Activated CD4-positive, alpha-beta T cell treated with anti-CD3 and anti-CD28 coated beads for 36 hours (primary cell): ENCODE measurements at regions of chr7 and their contacts with region 1.

Region 1: DNA sequence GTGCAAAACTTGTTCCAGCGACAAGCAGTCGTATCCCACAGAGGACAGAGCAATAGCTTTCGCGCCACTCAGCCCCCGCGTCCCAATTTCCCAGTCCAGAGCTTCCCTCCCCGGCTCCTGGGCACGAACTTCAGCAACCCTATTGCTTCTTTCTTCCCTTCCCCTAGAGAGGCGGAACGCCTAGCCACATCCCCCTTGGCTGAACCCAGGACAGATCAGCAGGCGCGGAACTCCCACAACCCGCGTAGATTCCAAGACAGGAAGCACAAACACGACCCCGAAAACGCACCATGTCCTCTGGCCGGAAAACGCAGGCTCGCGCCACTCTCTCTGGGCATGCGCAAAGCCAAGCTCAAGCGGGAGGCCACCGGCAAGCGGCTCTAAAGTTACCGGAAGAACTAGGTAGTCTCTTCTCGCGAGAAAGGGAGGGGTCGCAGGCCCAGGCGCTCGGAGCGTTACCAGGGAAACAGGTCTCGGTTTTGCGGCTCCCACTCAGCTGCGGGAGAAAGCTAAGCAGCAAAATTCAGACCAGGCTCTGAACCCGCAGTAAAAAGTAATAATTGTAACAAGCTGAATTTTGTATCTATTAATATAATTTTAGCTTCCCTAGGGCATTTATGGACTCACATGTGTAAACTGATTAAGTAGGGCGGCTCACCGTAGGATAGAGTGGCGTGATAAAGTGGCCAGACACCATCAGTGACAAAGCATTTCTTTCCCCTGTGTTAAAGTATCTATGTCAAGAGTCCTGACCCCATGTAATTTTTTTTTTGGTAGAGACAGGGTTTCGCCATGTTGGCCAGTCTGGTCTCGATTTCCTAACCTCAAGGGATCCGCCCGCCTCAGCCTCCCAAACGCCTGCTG is at the start of gene TMEM209:
- DNase-seq: peak; percentile 96
- ATAC-seq: peak; percentile 98
- H3K4me3 Mint-ChIP-seq: peak within 1 kb of the TSS; percentile 93
- H3K27ac Mint-ChIP-seq: peak within 1 kb of the TSS; percentile 100
- H3K4me1 Mint-ChIP-seq: peaks cover 35% of the 10 kb centered on the region
- H3K27me3 Mint-ChIP-seq: no peaks in the 10 kb centered on the region
- total RNA-seq, gene TMEM209: 41.0 to 57.0 TPM

Region 2: GRCh38 chr7:130050773-130051125 is 154.6 kb before region 1 on chr7:
- CTCF ChIA-PET with region 1: no interaction called
- POLR2A ChIA-PET with region 1: no interaction called
- intact Hi-C with region 1: loop called in 1 of 2 experiments (anchors 1 kb)
- DNase-seq: no peak
- ATAC-seq: no peak
- H3K4me3 Mint-ChIP-seq: peak overlapping the region; percentile 90
- H3K27ac Mint-ChIP-seq: peak overlapping the region; percentile 93
- H3K4me1 Mint-ChIP-seq: peaks cover 13% of the 10 kb centered on the region
- H3K27me3 Mint-ChIP-seq: no peaks in the 10 kb centered on the region

Region 3: GRCh38 chr7:130277763-130278643 is 72.7 kb after region 1 on chr7:
- CTCF ChIA-PET with region 1: interaction called, 4 read pairs
- POLR2A ChIA-PET with region 1: no interaction called
- intact Hi-C with region 1: loop called in 1 of 2 experiments (anchors 1 kb)
- DNase-seq: no peak
- ATAC-seq: no peak
- H3K4me3 Mint-ChIP-seq: no peak overlapping the region
- H3K27ac Mint-ChIP-seq: peak overlapping the region; percentile 79
- H3K4me1 Mint-ChIP-seq: peaks cover 37% of the 10 kb centered on the region
- H3K27me3 Mint-ChIP-seq: peaks cover 4% of the 10 kb centered on the region

Region 4: GRCh38 chr7:130440527-130441365 is 235.4 kb after region 1 on chr7 and contains the start of gene CEP41:
- CTCF ChIA-PET with region 1: no interaction called
- POLR2A ChIA-PET with region 1: no interaction called
- intact Hi-C with region 1: loop called in 1 of 2 experiments (anchors 1 kb)
- DNase-seq: peak; percentile 97
- ATAC-seq: peak; percentile 96
- H3K4me3 Mint-ChIP-seq: peak within 1 kb of the TSS; percentile 95
- H3K27ac Mint-ChIP-seq: peak within 1 kb of the TSS; percentile 99
- H3K4me1 Mint-ChIP-seq: peaks cover 49% of the 10 kb centered on the region
- H3K27me3 Mint-ChIP-seq: no peaks in the 10 kb centered on the region
- total RNA-seq, gene CEP41: 19.7 to 21.2 TPM

Region 5: DNA sequence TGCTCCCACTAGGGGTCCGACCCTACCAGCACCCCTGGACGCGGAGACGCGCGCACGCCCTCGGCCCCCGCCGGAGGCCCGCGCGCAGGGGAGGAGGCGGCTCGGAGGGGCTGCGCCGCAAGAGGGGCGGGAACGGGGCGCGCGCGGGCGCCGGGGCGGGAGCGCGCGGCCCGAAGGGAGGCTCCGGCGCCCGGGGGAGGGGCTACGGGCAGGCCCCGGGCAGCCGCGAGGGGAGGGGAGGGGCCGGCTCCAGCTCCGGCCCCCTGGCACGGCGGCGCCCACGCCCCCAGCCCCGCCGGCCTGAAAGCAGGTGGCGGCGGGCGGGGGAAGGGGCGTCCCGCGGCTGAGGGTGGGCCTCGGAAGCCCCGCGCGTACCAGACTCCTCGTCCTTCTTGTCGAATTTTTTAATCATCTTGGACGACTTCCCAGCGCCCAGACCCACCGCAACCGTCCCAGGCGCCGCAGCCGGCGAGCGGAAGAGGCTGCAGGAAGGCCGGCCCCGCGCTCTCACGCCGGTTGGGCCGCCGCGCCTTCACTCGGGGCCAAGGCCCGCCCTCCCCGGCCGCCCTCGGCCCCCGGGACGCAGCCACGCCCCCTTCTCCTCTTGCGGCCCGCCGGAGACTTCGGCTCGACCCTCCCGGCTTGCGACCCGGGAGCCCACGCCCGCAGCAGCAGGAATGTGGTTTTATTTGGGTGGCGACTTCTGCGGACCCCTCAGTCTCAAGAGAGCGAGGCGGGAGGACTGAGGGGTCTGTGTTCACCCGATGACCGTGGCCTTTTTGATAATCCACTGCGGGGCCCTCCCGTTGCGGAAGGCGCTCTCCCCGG is 463.2 kb after region 1 on chr7 and contains the start of gene COPG2:
- CTCF ChIA-PET with region 1: interaction called, 3 read pairs
- POLR2A ChIA-PET with region 1: interaction called, 3 read pairs
- intact Hi-C with region 1: loop called in 1 of 2 experiments (anchors 1 kb)
- DNase-seq: peak; percentile 86
- ATAC-seq: peak; percentile 97
- H3K4me3 Mint-ChIP-seq: peak within 1 kb of the TSS; percentile 81
- H3K27ac Mint-ChIP-seq: peak within 1 kb of the TSS; percentile 70
- H3K4me1 Mint-ChIP-seq: peaks cover 16% of the 10 kb centered on the region
- H3K27me3 Mint-ChIP-seq: peaks cover 5% of the 10 kb centered on the region
- total RNA-seq, gene COPG2: 23.5 to 25.9 TPM